GM18951 (cell line): ENCODE measurements at regions of chr1 and their contacts with region 1.

Region 1: DNA sequence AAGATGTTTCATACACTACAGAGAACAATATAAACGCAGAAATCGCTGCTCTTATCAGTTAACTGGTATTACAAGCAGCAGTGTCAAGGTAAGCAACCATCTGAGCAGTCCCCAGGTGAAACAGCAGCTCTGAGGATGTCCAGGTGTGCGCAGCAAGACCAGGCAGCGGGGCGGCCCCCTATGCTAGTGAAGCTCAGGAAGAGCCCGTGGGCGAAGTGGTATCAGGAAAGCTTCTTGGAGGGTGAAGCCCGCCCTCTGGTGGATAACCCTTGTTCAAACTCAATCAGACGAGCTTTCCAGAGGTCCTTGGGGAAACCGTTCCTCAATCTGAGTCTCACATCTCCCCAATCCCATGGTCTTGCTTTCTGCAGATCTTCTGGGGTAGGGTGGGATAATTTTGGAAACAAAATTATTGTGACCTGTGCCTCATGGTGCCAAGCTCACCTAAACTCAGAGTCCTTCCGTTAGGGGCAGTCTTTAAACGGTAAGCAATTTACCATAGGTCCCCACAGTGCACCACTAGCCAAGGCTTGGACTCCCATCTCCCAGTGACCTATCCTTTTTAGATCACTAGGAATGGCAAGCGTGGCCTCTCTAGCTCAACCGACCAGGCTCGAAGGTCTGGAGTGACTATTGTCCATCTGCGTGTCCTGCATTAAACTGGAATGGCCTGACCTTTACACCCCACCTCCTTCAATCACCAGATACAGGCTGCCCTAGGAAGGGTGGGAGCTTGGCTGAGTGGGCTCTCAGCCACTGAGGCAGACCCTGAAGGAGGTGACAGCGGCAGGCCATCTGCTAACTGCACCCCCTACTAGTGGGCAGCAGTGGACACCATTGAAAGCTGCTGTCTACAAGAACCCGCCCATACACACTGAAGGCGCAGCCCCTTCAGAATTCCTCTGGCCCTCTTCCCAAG is 13.6 kb upstream of the FAM110D start:
- POLR2A ChIP-seq: no peak

Region 2: DNA sequence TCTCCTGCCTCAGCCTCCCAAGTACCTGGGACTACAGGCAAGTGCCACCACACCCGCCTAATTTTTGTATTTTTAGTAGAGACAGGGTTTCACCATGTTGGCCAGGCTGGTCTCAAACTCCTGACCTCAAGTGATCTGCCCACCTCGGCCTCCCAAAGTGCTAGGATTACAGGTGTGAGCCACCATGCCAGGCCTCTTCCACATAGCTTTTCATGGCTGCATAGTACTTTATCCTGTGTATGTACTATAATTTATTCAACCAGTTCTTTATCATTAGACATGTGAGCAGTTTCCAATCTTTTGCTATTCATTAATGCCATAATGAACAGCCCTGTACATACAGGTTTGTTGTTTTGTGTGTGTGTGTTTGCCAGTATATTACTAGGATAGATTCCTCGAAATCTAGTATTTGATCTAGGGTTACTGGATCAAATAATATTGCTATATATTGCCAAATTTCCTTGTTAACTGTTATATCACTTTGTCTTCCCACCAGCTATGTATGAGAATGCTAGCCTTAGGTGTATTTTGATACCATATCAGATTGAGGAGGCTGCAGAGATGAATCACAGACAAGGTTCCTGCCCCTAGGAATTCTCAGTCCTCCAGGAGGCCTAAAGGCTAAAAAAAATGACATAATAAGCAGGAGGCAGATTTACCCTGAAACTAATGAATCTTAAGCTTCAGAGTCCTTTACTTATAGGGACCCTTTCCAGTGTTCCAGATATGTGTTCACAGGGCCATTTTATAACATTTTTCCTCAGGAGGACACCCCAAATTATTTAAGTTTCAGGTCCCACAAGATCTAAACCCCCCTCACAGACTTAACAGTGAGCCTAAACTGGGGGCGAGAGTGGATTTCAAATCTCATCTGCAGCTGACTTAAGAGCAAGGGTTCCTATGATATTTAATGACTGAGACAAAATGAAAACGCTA is 35.8 kb before region 1 on chr1:
- in situ Hi-C with region 1: loop called (anchors 5 kb)
- POLR2A ChIP-seq: no peak

Region 3: GRCh38 chr1:26363549-26364448 is 218.5 kb after region 1 on chr1:
- in situ Hi-C with region 1: no loop called
- POLR2A ChIP-seq: no peak